HCT116 (cell line): ENCODE measurements at regions of chr1 and their contacts with region 1.

Region 1: DNA sequence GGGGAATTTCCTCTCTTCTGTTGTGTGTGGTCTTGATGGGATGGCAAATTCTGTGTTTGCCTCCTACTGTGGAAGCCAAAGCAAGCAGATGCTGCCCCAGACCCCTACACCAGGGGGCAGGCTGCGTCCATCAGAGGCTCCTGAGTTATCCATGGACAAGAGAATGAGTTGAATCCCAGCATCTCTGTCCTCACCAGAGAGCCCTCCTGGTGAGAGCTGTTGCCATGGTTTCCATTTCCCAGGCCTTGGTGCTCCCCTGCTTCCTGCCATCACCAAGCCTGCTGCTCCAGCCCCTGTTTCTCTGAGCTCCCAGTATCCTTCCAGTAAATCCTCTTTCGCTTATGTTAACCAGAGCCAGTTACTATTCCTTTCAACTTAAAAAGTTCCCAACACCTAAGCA is 20.4 kb upstream of the GNG12 start:
- DNase-seq: peak; percentile 44
- ATAC-seq: peak; percentile 84
- H3K4me3 ChIP-seq: no peak overlapping the region
- H3K27ac ChIP-seq: no peak overlapping the region
- H3K4me1 ChIP-seq: peaks cover 10 to 14% of the 10 kb centered on the region in 2 experiments
- H3K27me3 ChIP-seq: no peaks in the 10 kb centered on the region; the same call in 1 of the 2 replicates
- CTCF ChIP-seq: peak; percentile 88 to 97 (median 89)
- POLR2A ChIP-seq: no peak
- RAD21 ChIP-seq: peak; percentile 98

Region 2: GRCh38 chr1:67535474-67535873 is 318.2 kb before region 1 on chr1:
- CTCF ChIA-PET with region 1: interaction called, 4 read pairs
- POLR2A ChIA-PET with region 1: no interaction called
- RAD21 ChIA-PET with region 1: interaction called, 3 read pairs
- intact Hi-C with region 1: loop called (anchors 5 kb)
- DNase-seq: peak; percentile 69
- ATAC-seq: peak; percentile 87
- H3K4me3 ChIP-seq: no peak overlapping the region
- H3K27ac ChIP-seq: no peak overlapping the region
- H3K4me1 ChIP-seq: no peaks in the 10 kb centered on the region
- H3K27me3 ChIP-seq: no peaks in the 10 kb centered on the region
- CTCF ChIP-seq: peak; percentile 88 to 99 (median 97)
- POLR2A ChIP-seq: no peak
- RAD21 ChIP-seq: peak; percentile 95

Region 3: DNA sequence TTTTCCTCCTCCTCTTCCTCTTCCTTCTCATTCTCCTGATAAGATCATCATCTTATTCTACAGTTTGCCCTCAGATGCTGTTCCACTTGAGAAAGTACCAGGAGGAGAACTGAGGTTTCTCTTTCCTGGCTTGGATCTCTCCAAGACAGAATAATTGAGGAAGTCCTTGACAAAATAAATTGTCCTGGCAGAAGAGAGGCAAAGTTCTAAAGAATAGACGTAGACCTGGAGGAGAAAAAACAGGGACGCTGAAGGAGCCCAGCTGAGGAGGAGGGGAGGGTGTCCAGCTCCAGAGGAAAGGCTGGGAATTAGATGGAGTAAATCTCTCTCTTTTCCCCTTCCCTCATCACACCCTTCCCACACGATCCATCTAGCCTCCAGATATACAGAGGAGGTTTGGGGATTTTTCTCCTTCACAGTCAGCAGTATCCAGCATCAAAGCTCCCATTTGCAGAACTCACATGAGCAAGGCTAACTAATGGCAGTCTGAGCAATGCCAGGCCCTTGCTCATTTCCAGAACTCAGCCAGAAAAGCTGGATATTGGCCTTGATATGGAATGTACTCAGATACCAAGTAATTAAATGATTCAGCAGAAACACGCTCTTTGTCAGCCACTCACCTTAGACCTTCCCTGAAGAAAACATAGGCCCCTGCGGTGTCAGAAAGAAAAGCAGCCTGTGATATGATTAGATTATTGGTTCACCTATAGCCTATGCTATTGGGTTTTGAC is 15.4 kb before region 1 on chr1:
- CTCF ChIA-PET with region 1: interaction called, 26 read pairs
- POLR2A ChIA-PET with region 1: no interaction called
- RAD21 ChIA-PET with region 1: no interaction called
- intact Hi-C with region 1: no loop called
- DNase-seq: no peak
- ATAC-seq: no peak
- H3K4me3 ChIP-seq: no peak overlapping the region
- H3K27ac ChIP-seq: no peak overlapping the region
- H3K4me1 ChIP-seq: peaks cover 4 to 9% of the 10 kb centered on the region in 2 experiments; a peak in 3 of 4 replicates
- H3K27me3 ChIP-seq: no peaks in the 10 kb centered on the region
- CTCF ChIP-seq: no peak
- POLR2A ChIP-seq: no peak
- RAD21 ChIP-seq: no peak

Region 4: GRCh38 chr1:68111519-68112436 is 258.1 kb after region 1 on chr1:
- CTCF ChIA-PET with region 1: interaction called, 18 read pairs
- POLR2A ChIA-PET with region 1: no interaction called
- RAD21 ChIA-PET with region 1: interaction called in 1 of 2 experiments, 8 read pairs
- intact Hi-C with region 1: loop called (anchors 1 kb)
- DNase-seq: peak; percentile 45
- ATAC-seq: peak; percentile 84
- H3K4me3 ChIP-seq: no peak overlapping the region
- H3K27ac ChIP-seq: no peak overlapping the region
- H3K4me1 ChIP-seq: peaks cover 0 to 27% of the 10 kb centered on the region in 2 experiments; a peak in 2 of 4 replicates
- H3K27me3 ChIP-seq: no peaks in the 10 kb centered on the region
- CTCF ChIP-seq: peak; percentile 54 to 84 (median 67)
- POLR2A ChIP-seq: no peak
- RAD21 ChIP-seq: peak; percentile 92

Region 5: GRCh38 chr1:68442822-68443556 is 589.3 kb after region 1 on chr1:
- CTCF ChIA-PET with region 1: no interaction called
- POLR2A ChIA-PET with region 1: no interaction called
- RAD21 ChIA-PET with region 1: no interaction called
- intact Hi-C with region 1: loop called (anchors 10 kb)
- DNase-seq: peak; percentile 43
- ATAC-seq: peak; percentile 88
- H3K4me3 ChIP-seq: no peak overlapping the region
- H3K27ac ChIP-seq: no peak overlapping the region
- H3K4me1 ChIP-seq: peaks cover 2 to 12% of the 10 kb centered on the region in 2 experiments; a peak in 2 of 4 replicates
- H3K27me3 ChIP-seq: no peaks in the 10 kb centered on the region
- CTCF ChIP-seq: peak; percentile 47 to 80 (median 77); a peak in 5 of 6 replicates
- POLR2A ChIP-seq: no peak
- RAD21 ChIP-seq: peak; percentile 70